ENCODE measurements at regions of chr2 and their contacts with region 1.

Region 1: DNA sequence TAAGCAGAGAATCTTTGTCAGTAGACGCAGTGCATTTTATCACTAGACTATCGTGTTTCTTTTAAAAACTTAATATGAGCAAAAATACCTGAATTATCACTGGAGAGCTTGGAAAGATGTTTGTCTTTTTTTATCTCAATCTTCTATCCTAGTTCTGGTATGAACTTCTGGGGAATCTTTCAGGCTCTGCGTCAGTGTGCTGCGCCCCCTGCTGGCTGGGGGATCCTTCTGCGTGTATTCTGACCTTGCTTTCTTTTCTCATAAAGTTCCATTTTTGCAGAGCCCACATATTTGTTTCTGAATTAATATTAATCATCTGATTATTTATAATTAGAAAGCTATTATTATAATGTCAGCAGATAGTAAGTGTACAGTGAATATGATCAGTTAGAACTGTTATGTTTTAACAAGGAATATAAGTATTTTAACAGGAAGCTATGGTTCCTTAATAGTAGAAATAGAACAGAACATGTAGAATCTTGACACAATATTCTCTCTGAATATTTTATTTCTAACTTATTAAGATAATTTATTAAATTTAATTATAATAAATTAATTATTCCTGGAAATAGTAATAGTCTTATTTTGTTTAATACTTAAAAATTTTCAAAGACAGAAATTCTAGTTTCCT is 945.0 kb upstream of the CRIM1 start:
- DNase-seq: peak; percentile 52
- H3K4me3 Mint-ChIP-seq: no peak overlapping the region
- H3K27ac Mint-ChIP-seq: no peak overlapping the region
- H3K4me1 Mint-ChIP-seq: no peaks in the 10 kb centered on the region
- H3K27me3 Mint-ChIP-seq: peaks cover 3% of the 10 kb centered on the region

Region 2: GRCh38 chr2:33673937-33674336 is 1736.6 kb before region 1 on chr2:
- CTCF ChIA-PET with region 1: no interaction called
- POLR2A ChIA-PET with region 1: no interaction called
- intact Hi-C with region 1: loop called (anchors 10 kb)
- DNase-seq: no peak
- H3K4me3 Mint-ChIP-seq: no peak overlapping the region
- H3K27ac Mint-ChIP-seq: no peak overlapping the region
- H3K4me1 Mint-ChIP-seq: no peaks in the 10 kb centered on the region
- H3K27me3 Mint-ChIP-seq: peaks cover 2% of the 10 kb centered on the region

Region 3: GRCh38 chr2:34096562-34097171 is 1313.9 kb before region 1 on chr2:
- CTCF ChIA-PET with region 1: interaction called, 7 read pairs
- POLR2A ChIA-PET with region 1: no interaction called
- intact Hi-C with region 1: loop called (anchors 1 kb)
- DNase-seq: peak; percentile 35
- H3K4me3 Mint-ChIP-seq: no peak overlapping the region
- H3K27ac Mint-ChIP-seq: no peak overlapping the region
- H3K4me1 Mint-ChIP-seq: no peaks in the 10 kb centered on the region
- H3K27me3 Mint-ChIP-seq: no peaks in the 10 kb centered on the region

Region 4: GRCh38 chr2:35281702-35282101 is 128.8 kb before region 1 on chr2:
- CTCF ChIA-PET with region 1: no interaction called
- POLR2A ChIA-PET with region 1: no interaction called
- intact Hi-C with region 1: no loop called
- DNase-seq: no peak
- H3K4me3 Mint-ChIP-seq: no peak overlapping the region
- H3K27ac Mint-ChIP-seq: no peak overlapping the region
- H3K4me1 Mint-ChIP-seq: no peaks in the 10 kb centered on the region
- H3K27me3 Mint-ChIP-seq: no peaks in the 10 kb centered on the region

Region 5: DNA sequence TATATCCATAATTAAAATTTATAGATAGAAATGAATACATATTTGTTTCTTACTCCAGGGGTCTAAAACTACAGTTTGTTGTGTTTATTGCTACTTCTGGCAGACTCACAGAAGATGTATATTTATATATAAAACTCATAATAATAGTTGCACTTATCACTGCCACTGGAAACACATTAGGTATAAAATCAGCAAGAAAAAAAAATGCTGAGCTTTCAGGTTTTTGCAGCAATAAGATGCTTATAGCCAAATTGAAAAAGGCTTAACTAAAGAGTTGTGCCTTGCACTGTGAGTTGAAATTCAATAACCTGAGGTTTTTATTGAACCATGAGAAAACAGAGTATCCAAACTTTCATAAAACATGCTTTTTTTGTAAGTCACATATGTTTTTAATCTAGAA is 321.1 kb after region 1 on chr2:
- CTCF ChIA-PET with region 1: no interaction called
- POLR2A ChIA-PET with region 1: no interaction called
- intact Hi-C with region 1: no loop called
- DNase-seq: no peak
- H3K4me3 Mint-ChIP-seq: no peak overlapping the region
- H3K27ac Mint-ChIP-seq: no peak overlapping the region
- H3K4me1 Mint-ChIP-seq: no peaks in the 10 kb centered on the region
- H3K27me3 Mint-ChIP-seq: peaks cover 2% of the 10 kb centered on the region

Measured in activated CD4-positive, alpha-beta memory T cell treated with anti-CD3 and anti-CD28 coated beads for 36 hours (primary cell).